ENCODE measurements at regions of chr12 and their contacts with region 1.

Region 1: GRCh38 chr12:103530307-103531066 is 34.7 kb upstream of the C12orf42 start:
- DNase-seq: no peak
- ATAC-seq: no peak

Region 2: DNA sequence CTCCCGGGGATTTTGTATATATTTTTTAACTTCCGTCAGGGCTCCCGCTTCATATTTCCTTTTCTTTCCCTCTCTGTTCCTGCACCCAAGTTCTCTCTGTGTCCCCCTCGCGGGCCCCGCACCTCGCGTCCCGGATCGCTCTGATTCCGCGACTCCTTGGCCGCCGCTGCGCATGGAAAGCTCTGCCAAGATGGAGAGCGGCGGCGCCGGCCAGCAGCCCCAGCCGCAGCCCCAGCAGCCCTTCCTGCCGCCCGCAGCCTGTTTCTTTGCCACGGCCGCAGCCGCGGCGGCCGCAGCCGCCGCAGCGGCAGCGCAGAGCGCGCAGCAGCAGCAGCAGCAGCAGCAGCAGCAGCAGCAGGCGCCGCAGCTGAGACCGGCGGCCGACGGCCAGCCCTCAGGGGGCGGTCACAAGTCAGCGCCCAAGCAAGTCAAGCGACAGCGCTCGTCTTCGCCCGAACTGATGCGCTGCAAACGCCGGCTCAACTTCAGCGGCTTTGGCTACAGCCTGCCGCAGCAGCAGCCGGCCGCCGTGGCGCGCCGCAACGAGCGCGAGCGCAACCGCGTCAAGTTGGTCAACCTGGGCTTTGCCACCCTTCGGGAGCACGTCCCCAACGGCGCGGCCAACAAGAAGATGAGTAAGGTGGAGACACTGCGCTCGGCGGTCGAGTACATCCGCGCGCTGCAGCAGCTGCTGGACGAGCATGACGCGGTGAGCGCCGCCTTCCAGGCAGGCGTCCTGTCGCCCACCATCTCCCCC is 572.2 kb before region 1 on chr12:
- intact Hi-C with region 1: loop called (anchors 10 kb)
- DNase-seq: no peak
- ATAC-seq: no peak

Region 3: GRCh38 chr12:103742349-103742932 is 212.0 kb after region 1 on chr12:
- intact Hi-C with region 1: no loop called
- DNase-seq: no peak
- ATAC-seq: peak; percentile 34

Measured in sciatic nerve (tissue), 2 donors.